Panc1 (cell line): ENCODE measurements at regions of chr11 and their contacts with region 1.

Region 1: DNA sequence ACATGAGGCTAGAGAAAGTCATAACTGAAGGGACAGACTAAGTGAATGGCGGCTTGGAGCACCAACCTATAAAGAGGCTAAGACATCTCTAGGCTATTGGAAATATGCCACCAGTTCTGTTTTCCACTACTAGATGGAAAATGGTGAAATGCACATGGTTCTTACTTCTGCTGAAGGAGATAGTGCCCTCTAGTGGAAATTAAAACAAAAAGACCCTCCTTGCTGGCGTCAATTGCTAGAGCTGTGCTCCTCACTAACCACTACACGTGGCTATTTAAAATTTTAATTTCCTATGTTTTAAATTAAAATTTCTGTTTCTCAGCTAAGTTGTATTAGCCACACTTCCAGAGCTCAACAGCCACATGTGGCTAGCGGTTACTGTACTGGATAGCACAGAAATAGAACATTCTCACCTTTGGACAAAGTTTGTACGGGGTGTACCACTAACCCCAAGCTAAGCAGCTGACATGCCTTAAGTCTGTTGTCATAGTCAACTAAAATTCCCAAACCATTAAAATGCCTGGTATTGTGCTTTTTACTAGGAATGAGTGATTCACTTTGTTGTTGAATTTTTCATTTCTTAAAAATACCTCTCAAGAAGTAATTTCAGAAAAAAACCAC is 34.1 kb upstream of the CALCA start:
- DNase-seq: peak; percentile 30
- ATAC-seq: peak; percentile 77
- H3K4me3 ChIP-seq: no peak overlapping the region
- H3K27ac ChIP-seq: no peak overlapping the region
- H3K4me1 ChIP-seq: no peaks in the 10 kb centered on the region
- H3K27me3 ChIP-seq: peaks cover 9% of the 10 kb centered on the region
- CTCF ChIP-seq: peak; percentile 74

Region 2: GRCh38 chr11:14809466-14809865 is 196.8 kb before region 1 on chr11:
- CTCF ChIA-PET with region 1: no interaction called
- POLR2A ChIA-PET with region 1: no interaction called
- in situ Hi-C with region 1: no loop called
- intact Hi-C with region 1: loop called (anchors 10 kb)
- DNase-seq: no peak
- ATAC-seq: no peak
- H3K4me3 ChIP-seq: no peak overlapping the region
- H3K27ac ChIP-seq: no peak overlapping the region
- H3K4me1 ChIP-seq: no peaks in the 10 kb centered on the region
- H3K27me3 ChIP-seq: no peaks in the 10 kb centered on the region
- CTCF ChIP-seq: no peak

Region 3: GRCh38 chr11:14974515-14975251 is 31.6 kb before region 1 on chr11:
- CTCF ChIA-PET with region 1: interaction called, 7 read pairs
- POLR2A ChIA-PET with region 1: no interaction called
- in situ Hi-C with region 1: no loop called
- intact Hi-C with region 1: loop called (anchors 2 kb)
- DNase-seq: peak; percentile 20
- ATAC-seq: peak; percentile 79
- H3K4me3 ChIP-seq: peak overlapping the region in 1 of 2 experiments; percentile 37; a peak in 2 of 4 replicates
- H3K27ac ChIP-seq: no peak overlapping the region
- H3K4me1 ChIP-seq: peaks cover 8% of the 10 kb centered on the region; the same call in 1 of the 2 replicates
- H3K27me3 ChIP-seq: peaks cover 34% of the 10 kb centered on the region
- CTCF ChIP-seq: peak; percentile 89